GM23248 (cell line): ENCODE measurements at regions of chr10 and their contacts with region 1.

Region 1: DNA sequence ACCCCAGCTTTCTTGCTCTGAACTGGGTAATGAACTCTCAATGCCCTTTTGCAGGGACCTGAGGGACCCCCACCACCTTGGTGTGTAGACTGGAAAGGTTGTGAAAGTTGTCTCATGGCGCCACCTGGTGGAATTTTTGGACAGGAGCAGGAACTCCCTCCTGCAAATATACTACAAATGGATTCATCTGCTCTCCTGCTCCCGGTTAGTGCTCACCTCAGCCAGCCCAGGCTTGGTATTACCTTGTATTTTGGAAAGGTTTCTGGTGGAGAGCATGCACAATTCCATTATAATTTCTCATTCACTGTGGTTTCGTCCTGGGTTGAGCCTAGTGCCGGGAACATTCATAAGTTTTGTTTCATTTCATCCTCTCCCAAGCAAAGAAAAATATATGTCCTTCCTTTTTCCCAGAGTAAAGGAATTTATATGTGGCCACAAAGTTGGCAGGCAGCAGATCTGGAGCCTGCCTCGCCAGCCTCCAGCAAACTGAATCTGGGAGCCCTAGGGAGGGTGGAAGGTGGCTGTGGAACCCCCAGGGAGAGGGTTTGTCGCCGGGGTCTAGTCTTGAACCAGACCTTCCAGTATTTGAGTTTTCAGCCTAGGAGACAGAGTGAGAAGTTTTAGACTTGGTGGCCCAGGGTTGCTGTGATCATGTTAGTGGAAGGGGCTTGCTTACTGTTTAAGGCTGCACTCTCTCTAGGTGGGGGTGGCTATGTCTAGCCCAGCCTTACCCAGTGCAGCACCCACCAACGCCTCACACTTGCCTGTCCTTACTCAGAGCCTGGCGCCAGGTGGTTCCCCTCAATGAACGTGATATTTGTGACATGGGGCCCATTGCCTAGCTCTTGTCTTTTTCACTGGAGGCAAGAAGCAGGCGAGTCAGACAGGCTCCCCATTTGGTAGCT is 9.5 kb downstream of the FAM241B start:
- DNase-seq: peak; percentile 57
- H3K4me3 ChIP-seq: no peak overlapping the region
- H3K27ac ChIP-seq: no peak overlapping the region
- H3K4me1 ChIP-seq: no peaks in the 10 kb centered on the region
- H3K27me3 ChIP-seq: peaks cover 38% of the 10 kb centered on the region

Region 2: DNA sequence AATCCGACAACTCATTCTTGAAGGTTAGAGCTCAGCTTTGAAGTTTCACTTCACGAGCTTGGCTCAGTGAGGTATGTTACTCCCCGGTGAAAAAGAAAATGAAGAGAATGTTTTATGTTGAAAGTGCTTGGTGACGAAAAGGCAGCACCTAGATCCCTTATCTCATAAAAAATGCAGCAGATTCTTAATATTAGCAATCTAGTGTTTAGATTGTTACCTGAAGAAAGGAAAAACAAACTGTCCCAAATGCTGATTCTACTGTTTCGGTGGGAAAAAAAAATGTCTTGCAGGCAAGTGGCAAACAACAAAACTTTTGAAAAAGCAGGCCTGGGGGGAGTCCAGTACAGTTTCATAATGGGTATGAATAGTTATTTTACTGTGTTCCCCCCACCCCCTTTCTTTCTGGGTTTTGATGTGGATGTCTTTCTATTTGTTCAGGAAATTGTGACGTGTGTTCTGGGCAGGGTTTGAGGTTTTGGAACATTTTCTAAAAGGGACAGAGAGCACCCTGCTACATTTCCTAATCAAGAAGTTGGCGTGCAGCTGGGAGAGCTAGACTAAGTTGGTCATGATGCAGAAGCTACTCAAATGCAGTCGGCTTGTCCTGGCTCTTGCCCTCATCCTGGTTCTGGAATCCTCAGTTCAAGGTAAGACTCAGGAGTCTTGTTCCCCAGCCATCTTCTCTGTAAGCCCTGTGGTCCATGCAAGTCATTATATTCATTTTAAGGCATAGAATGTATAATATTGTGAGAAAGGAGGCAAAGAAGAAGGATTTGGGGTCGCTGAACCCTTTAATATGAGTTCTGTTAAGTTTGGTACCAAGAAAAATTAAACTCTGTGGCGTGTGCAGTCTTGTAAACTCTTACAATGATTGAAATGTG is 551.7 kb before region 1 on chr10 and contains the start of gene SRGN:
- in situ Hi-C with region 1: no loop called
- DNase-seq: peak; percentile 74
- H3K4me3 ChIP-seq: peak within 1 kb of the TSS; percentile 67
- H3K27ac ChIP-seq: peak within 1 kb of the TSS; percentile 58
- H3K4me1 ChIP-seq: peaks cover 23% of the 10 kb centered on the region
- H3K27me3 ChIP-seq: no peaks in the 10 kb centered on the region
- total RNA-seq, gene SRGN: 108 and 136 TPM in 2 replicates

Region 3: GRCh38 chr10:69425511-69426298 is 213.8 kb before region 1 on chr10:
- in situ Hi-C with region 1: loop called (anchors 10 kb)
- DNase-seq: no peak
- H3K4me3 ChIP-seq: no peak overlapping the region
- H3K27ac ChIP-seq: no peak overlapping the region
- H3K4me1 ChIP-seq: no peaks in the 10 kb centered on the region
- H3K27me3 ChIP-seq: peaks cover 12% of the 10 kb centered on the region; the same call in 1 of the 2 replicates

Region 4: GRCh38 chr10:69515699-69516259 is 123.8 kb before region 1 on chr10:
- in situ Hi-C with region 1: loop called (anchors 5 kb)
- DNase-seq: peak; percentile 78
- H3K4me3 ChIP-seq: no peak overlapping the region
- H3K27ac ChIP-seq: no peak overlapping the region
- H3K4me1 ChIP-seq: no peaks in the 10 kb centered on the region
- H3K27me3 ChIP-seq: peaks cover 51% of the 10 kb centered on the region